Activated B cell treated with CpG ODN at 0.5 μM for 24 hours (primary cell): ENCODE measurements at regions of chr17 and their contacts with region 1.

Region 1: DNA sequence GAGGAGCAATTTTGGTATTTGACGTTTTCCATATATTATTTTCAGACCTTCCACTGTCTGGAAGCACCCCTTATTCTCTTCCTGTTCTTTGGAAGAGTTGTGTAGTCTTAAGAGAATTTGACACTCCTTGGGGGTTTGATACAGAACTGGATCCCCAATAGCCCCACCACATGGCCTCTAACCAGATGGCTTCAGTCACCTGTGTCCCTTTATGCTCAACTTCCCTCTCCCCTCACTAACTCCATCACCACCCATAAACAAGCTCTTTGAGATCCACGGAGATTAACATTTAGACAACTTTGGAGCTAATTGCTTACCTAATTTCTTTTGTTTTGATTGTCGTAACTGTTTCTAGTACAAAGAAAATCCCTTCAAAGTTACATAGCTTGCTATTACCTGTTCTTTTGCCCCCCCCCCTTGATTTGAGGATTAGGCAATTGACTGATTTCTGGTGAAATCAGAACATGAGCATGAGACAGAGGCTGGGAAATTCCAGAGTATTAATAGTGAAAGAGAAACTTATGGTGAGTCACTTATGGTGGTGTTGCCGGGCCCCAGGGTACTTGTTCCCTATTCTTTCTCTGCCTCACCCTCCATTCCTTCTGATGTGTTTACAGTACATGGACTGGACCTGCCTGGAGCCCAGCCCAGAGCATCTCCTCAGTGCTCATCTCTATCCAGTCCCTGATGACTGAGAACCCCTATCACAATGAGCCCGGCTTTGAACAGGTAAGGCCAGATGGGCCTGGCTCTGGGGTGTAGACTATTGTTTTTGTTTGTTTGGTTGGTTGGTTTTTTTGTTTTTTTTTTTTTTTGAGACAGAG is 7.5 kb downstream of the UBE2Z start:
- DNase-seq: peak; percentile 35
- ATAC-seq: peak; percentile 90
- H3K4me3 Mint-ChIP-seq: peak overlapping the region; percentile 60
- H3K27ac Mint-ChIP-seq: peak overlapping the region; percentile 92
- H3K4me1 Mint-ChIP-seq: peaks cover 54% of the 10 kb centered on the region
- H3K27me3 Mint-ChIP-seq: no peaks in the 10 kb centered on the region
- CTCF ChIP-seq: no peak

Region 2: GRCh38 chr17:48944519-48945260 is 29.0 kb after region 1 on chr17 and contains the start of gene SNF8:
- CTCF ChIA-PET with region 1: no interaction called
- POLR2A ChIA-PET with region 1: interaction called, 23 read pairs
- intact Hi-C with region 1: loop called (anchors 1 kb)
- DNase-seq: peak; percentile 96
- ATAC-seq: peak; percentile 94
- H3K4me3 Mint-ChIP-seq: peak within 1 kb of the TSS; percentile 96
- H3K27ac Mint-ChIP-seq: peak within 1 kb of the TSS; percentile 90
- H3K4me1 Mint-ChIP-seq: peaks cover 16% of the 10 kb centered on the region
- H3K27me3 Mint-ChIP-seq: no peaks in the 10 kb centered on the region
- CTCF ChIP-seq: no peak
- total RNA-seq, gene SNF8: 129 and 130 TPM in 2 replicates